Psoas muscle (tissue), 8 donors: ENCODE measurements at regions of chr10 and their contacts with region 1.

Region 1: DNA sequence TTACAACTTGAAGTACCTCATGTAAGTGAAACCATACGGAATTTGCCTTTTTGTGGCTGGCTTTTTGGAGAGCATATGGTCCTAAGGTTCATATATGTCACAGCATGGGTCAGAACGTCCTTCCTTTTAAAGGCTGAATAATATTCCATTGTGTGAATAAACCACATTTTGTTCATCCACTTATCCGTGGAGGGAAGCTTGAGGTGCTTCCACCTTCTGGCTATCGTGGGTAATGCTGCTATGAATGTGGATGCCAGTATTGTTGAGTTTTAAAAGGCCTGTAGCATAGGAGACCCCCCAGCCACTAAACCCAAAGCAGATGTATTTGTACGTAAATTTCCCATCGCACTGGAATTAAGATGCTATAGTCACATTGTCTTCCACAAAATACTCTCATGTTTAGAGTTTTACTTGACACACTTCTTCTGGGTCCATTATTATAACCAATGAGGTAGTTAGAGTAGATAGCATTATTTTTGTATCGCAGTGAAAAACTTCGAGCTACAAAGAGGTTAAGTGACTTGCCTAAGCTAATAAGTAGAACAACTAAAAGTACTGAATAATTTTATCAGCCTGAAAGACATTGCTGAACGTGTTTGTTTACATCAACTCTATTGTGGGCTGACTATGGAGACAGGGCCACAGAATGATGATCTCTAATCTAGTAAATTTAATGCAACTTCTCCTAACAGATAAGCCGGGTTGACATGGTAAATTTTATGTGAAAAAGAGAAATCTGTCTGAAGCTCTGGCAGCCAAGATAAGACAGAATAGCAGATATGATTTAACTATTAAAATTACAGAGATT is 183.0 kb upstream of the CTBP2 start:
- DNase-seq: no peak
- ATAC-seq: peak in 2 of 4 donors; percentile 51 to 60
- H3K4me3 ChIP-seq: no peak overlapping the region
- H3K27ac ChIP-seq: no peak overlapping the region
- H3K4me1 ChIP-seq: no peaks in the 10 kb centered on the region
- H3K27me3 ChIP-seq: no peaks in the 10 kb centered on the region
- CTCF ChIP-seq: peak; percentile 70

Region 2: GRCh38 chr10:125048101-125048864 is 295.0 kb before region 1 on chr10:
- intact Hi-C with region 1: loop called in 1 of 2 experiments (anchors 2 kb)
- DNase-seq: peak; percentile 87 to 93
- ATAC-seq: peak; percentile 83 to 91 (median 87)
- H3K4me3 ChIP-seq: no peak overlapping the region
- H3K27ac ChIP-seq: peak overlapping the region; percentile 11
- H3K4me1 ChIP-seq: peaks cover 74% of the 10 kb centered on the region
- H3K27me3 ChIP-seq: no peaks in the 10 kb centered on the region
- CTCF ChIP-seq: peak; percentile 99

Region 3: DNA sequence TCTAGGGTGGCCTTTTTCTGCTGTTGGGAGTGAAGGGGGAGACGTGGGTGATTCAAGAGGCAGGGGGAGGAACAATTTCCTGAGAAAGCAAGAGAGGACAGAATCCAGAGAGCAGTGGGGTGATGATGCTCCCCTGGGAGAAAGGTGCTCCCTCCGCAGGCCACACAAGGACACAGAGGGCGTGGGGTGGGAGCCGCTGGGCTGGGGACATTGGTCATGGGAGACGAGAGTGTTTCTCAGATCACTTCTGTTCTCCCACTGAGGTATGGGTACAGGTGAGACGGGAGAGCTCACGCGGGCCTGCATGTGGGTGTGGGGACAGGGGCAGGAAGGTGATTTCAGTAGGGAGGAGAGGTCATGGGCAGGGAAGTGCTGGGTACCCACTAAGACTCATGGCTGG is 76.5 kb after region 1 on chr10:
- intact Hi-C with region 1: loop called in 1 of 2 experiments (anchors 2 kb)
- DNase-seq: no peak
- ATAC-seq: no peak
- H3K4me3 ChIP-seq: no peak overlapping the region
- H3K27ac ChIP-seq: no peak overlapping the region
- H3K4me1 ChIP-seq: no peaks in the 10 kb centered on the region
- H3K27me3 ChIP-seq: peaks cover 0 to 3% (median 1%) of the 10 kb centered on the region in 3 donors
- CTCF ChIP-seq: no peak

Region 4: DNA sequence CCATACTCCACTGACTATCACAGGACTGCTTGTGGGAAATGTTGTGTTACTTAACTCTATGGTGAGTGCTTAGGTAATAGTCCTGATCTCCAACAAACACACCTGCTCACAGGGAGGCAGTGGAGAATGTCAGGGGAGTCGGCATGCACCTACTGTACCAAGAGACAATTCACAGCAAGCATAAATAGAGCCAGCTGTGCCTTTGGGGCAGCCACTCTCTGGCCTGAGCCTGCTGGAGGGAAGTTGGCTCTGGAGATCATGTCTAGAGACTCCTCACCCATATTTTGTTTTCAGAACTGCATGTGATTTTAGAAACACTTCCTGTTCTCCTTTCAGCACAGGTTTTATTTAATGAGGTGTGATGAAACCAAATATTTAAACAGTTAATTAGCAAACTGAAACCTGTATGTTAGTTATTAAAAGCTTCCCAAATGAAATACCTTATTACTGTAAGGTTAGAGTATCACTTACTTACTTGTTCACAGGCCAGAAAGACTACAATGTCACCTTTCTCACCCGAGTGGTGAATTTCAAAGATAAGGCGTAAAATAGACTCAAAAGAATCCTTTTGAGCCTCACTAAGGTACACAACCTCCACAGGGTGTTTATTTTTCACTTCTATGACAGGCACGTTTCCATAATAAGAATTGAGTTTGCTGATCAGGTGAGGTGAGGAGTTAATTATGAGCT is 516.0 kb after region 1 on chr10:
- intact Hi-C with region 1: no loop called
- DNase-seq: no peak
- ATAC-seq: no peak
- H3K4me3 ChIP-seq: no peak overlapping the region
- H3K27ac ChIP-seq: no peak overlapping the region
- H3K4me1 ChIP-seq: no peaks in the 10 kb centered on the region
- H3K27me3 ChIP-seq: no peaks in the 10 kb centered on the region
- CTCF ChIP-seq: no peak